Panc1 (cell line): ENCODE measurements at regions of chr14 and their contacts with region 1.

Region 1: GRCh38 chr14:55071870-55072640 is 20.6 kb downstream of the MAPK1IP1L start:
- DNase-seq: no peak
- ATAC-seq: peak; percentile 67
- H3K4me3 ChIP-seq: no peak overlapping the region
- H3K27ac ChIP-seq: no peak overlapping the region
- H3K4me1 ChIP-seq: no peaks in the 10 kb centered on the region
- H3K27me3 ChIP-seq: no peaks in the 10 kb centered on the region
- CTCF ChIP-seq: no peak

Region 2: GRCh38 chr14:55026793-55027561 is 45.1 kb before region 1 on chr14 and contains the starts of genes SOCS4 and WDHD1:
- CTCF ChIA-PET with region 1: no interaction called
- POLR2A ChIA-PET with region 1: interaction called, 20 read pairs
- in situ Hi-C with region 1: no loop called
- intact Hi-C with region 1: no loop called
- DNase-seq: peak; percentile 61
- ATAC-seq: peak; percentile 99
- H3K4me3 ChIP-seq: peak within 1 kb of the TSS; percentile 80 to 94
- H3K27ac ChIP-seq: peak within 1 kb of the TSS; percentile 96
- H3K4me1 ChIP-seq: peaks cover 23% of the 10 kb centered on the region
- H3K27me3 ChIP-seq: no peaks in the 10 kb centered on the region
- CTCF ChIP-seq: no peak
- total RNA-seq, gene SOCS4: 19.9 TPM
- total RNA-seq, gene WDHD1: 21.7 TPM

Region 3: GRCh38 chr14:55092341-55092984 is 20.4 kb after region 1 on chr14:
- CTCF ChIA-PET with region 1: no interaction called
- POLR2A ChIA-PET with region 1: no interaction called
- in situ Hi-C with region 1: no loop called
- intact Hi-C with region 1: no loop called
- DNase-seq: no peak
- ATAC-seq: no peak
- H3K4me3 ChIP-seq: no peak overlapping the region
- H3K27ac ChIP-seq: peak overlapping the region; percentile 2; the same call in 1 of the 2 replicates
- H3K4me1 ChIP-seq: 0 out of 2 replicates have a peak, but pooled peaks cover 3% of the 10 kb centered on the region
- H3K27me3 ChIP-seq: no peaks in the 10 kb centered on the region
- CTCF ChIP-seq: no peak

Region 4: DNA sequence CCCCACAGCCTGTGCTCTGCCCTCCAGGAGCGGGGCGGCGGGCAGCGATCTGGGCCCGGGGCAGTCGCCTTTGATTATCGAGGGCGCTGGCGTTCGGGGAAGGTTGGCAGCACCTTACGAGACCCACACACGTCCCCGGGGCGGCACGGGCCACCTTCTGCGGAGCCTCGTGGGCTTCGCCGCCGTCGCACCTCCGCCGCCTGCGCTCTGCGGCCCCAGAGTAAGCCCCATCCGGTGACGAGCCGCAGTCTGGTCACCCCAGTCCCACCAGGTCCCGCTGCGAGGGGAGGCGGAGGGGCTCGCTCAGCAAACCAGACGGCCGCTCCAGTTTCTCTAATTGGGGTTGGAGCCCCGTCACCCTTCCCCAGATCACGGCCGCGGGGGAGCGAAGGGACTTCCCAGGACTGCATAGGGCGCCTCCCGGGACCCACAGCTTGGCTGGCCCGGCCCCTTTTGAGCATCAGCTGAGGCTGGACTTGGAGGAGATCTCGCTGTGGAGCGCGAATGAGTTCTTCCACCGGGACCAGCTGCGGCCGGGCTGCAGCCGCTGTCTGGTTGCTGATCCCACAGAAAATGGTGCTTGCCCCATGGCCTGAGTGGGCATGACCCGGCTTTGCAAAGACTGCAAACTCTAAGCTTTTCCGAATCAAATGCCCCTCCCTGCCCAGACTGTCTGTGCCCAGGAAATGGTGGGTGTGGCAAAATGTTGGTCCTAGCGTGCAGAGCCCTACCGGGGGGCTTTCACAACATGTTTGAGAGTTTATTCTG is 57.6 kb after region 1 on chr14:
- CTCF ChIA-PET with region 1: no interaction called
- POLR2A ChIA-PET with region 1: no interaction called
- in situ Hi-C with region 1: no loop called
- intact Hi-C with region 1: no loop called
- DNase-seq: no peak
- ATAC-seq: peak; percentile 82
- H3K4me3 ChIP-seq: peak overlapping the region; percentile 74 to 85
- H3K27ac ChIP-seq: peak overlapping the region; percentile 63
- H3K4me1 ChIP-seq: peaks cover 40% of the 10 kb centered on the region
- H3K27me3 ChIP-seq: no peaks in the 10 kb centered on the region
- CTCF ChIP-seq: no peak

Region 5: GRCh38 chr14:55146425-55146824 is 74.4 kb after region 1 on chr14:
- CTCF ChIA-PET with region 1: interaction called, 11 read pairs
- POLR2A ChIA-PET with region 1: no interaction called
- in situ Hi-C with region 1: no loop called
- intact Hi-C with region 1: no loop called
- DNase-seq: no peak
- ATAC-seq: no peak
- H3K4me3 ChIP-seq: no peak overlapping the region
- H3K27ac ChIP-seq: no peak overlapping the region
- H3K4me1 ChIP-seq: no peaks in the 10 kb centered on the region
- H3K27me3 ChIP-seq: no peaks in the 10 kb centered on the region
- CTCF ChIP-seq: no peak